ENCODE measurements at regions of chr12 and their contacts with region 1.

Region 1: DNA sequence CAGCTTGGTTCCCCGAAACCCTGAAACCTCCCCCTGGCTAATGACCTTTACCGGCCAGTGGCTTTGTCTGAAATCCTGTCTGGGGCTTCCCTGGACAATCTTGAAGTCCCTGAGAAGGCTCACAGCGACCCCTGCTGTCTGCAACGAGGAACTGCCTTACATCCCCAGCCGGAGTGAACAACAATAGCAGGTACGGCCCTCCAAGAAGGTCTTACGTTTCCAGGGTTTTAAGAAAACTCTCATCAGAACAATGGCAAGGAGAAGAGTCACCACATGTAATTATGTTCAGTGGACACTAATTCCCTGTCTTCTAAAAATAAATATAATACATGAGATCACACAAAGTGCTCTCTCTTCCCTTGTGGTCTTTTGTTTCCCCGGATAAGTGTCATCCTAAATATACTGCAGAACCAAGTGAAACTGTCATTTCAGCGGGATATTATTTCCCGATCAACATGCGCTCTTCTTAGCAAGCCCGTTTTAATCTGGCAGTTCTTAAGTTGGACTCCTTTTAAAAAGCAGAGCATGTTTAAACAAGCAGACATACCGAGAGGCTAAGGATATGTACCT is 53.3 kb downstream of the RBM19 start:
- DNase-seq: peak; percentile 70
- ATAC-seq: peak; percentile 94
- H3K4me3 ChIP-seq: no peak overlapping the region
- H3K27ac ChIP-seq: no peak overlapping the region
- H3K4me1 ChIP-seq: no peaks in the 10 kb centered on the region
- H3K27me3 ChIP-seq: no peaks in the 10 kb centered on the region
- CTCF ChIP-seq: peak; percentile 96
- POLR2A ChIP-seq: no peak; the same call in 1 of the 2 replicates
- RAD21 ChIP-seq: peak; percentile 95

Region 2: GRCh38 chr12:113310489-113310888 is 602.4 kb before region 1 on chr12:
- CTCF ChIA-PET with region 1: no interaction called
- POLR2A ChIA-PET with region 1: no interaction called
- dilution Hi-C with region 1: no loop called
- in situ Hi-C with region 1: loop called (anchors 10 kb)
- intact Hi-C with region 1: loop called (anchors 2 kb)
- DNase-seq: no peak
- ATAC-seq: no peak
- H3K4me3 ChIP-seq: no peak overlapping the region
- H3K27ac ChIP-seq: no peak overlapping the region
- H3K4me1 ChIP-seq: peaks cover 2% of the 10 kb centered on the region; the same call in 1 of the 2 replicates
- H3K27me3 ChIP-seq: no peaks in the 10 kb centered on the region
- CTCF ChIP-seq: 0 out of 2 replicates have a peak, but pooled peaks have one; percentile 1
- POLR2A ChIP-seq: no peak
- RAD21 ChIP-seq: no peak

Region 3: DNA sequence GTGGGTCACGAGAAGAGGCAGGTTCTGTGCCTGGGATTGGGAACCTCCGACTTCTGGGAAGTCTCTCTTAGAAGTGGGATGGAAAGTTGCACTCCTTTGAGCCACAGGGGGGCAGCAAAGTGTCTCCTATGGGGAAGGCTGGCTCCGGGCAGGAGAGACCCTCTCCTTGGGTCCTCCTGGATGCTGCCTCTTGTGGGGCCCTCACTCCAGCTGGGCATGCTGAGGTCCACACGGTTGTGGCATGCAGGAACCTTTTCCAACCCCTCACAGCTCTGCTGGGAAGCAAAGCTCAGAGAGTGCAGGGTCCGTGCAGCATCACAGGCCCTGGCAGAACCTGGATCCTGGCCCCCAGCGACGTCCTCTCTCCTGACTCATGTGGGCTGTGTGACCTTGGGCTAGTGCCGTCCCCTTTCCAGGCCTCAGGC is 473.2 kb before region 1 on chr12:
- CTCF ChIA-PET with region 1: no interaction called
- POLR2A ChIA-PET with region 1: no interaction called
- dilution Hi-C with region 1: no loop called
- in situ Hi-C with region 1: no loop called
- intact Hi-C with region 1: loop called (anchors 1 kb)
- DNase-seq: peak; percentile 31
- ATAC-seq: peak; percentile 86
- H3K4me3 ChIP-seq: no peak overlapping the region
- H3K27ac ChIP-seq: no peak overlapping the region
- H3K4me1 ChIP-seq: no peaks in the 10 kb centered on the region
- H3K27me3 ChIP-seq: peaks cover 11% of the 10 kb centered on the region
- CTCF ChIP-seq: peak; percentile 56
- POLR2A ChIP-seq: no peak
- RAD21 ChIP-seq: peak; percentile 67

Region 4: GRCh38 chr12:113462117-113462774 is 450.6 kb before region 1 on chr12:
- CTCF ChIA-PET with region 1: interaction called, 7 read pairs
- POLR2A ChIA-PET with region 1: no interaction called
- dilution Hi-C with region 1: no loop called
- in situ Hi-C with region 1: loop called (anchors 5 kb)
- intact Hi-C with region 1: loop called (anchors 1 kb)
- DNase-seq: peak; percentile 68
- ATAC-seq: peak; percentile 90
- H3K4me3 ChIP-seq: no peak overlapping the region
- H3K27ac ChIP-seq: no peak overlapping the region
- H3K4me1 ChIP-seq: no peaks in the 10 kb centered on the region; the same call in 1 of the 2 replicates
- H3K27me3 ChIP-seq: peaks cover 71% of the 10 kb centered on the region
- CTCF ChIP-seq: peak; percentile 86
- POLR2A ChIP-seq: no peak
- RAD21 ChIP-seq: peak; percentile 69

Region 5: GRCh38 chr12:113647048-113647447 is 265.8 kb before region 1 on chr12:
- CTCF ChIA-PET with region 1: no interaction called
- POLR2A ChIA-PET with region 1: no interaction called
- dilution Hi-C with region 1: no loop called
- in situ Hi-C with region 1: no loop called
- intact Hi-C with region 1: loop called (anchors 2 kb)
- DNase-seq: no peak
- ATAC-seq: no peak
- H3K4me3 ChIP-seq: no peak overlapping the region
- H3K27ac ChIP-seq: no peak overlapping the region
- H3K4me1 ChIP-seq: no peaks in the 10 kb centered on the region
- H3K27me3 ChIP-seq: peaks cover 10% of the 10 kb centered on the region
- CTCF ChIP-seq: no peak; the same call in 1 of the 2 replicates
- POLR2A ChIP-seq: no peak
- RAD21 ChIP-seq: no peak